ENCODE measurements at regions of chr1 and their contacts with region 1.

Region 1: GRCh38 chr1:47465605-47466004 is 27.8 kb downstream of the FOXD2 start:
- DNase-seq: no peak
- H3K4me3 ChIP-seq: no peak overlapping the region
- H3K27ac ChIP-seq: no peak overlapping the region
- H3K4me1 ChIP-seq: peaks cover 1% of the 10 kb centered on the region
- H3K27me3 ChIP-seq: peaks cover 85% of the 10 kb centered on the region
- CTCF ChIP-seq: no peak

Region 2: GRCh38 chr1:47241114-47242113 is 224.2 kb before region 1 on chr1:
- CTCF ChIA-PET with region 1: no interaction called
- POLR2A ChIA-PET with region 1: no interaction called
- intact Hi-C with region 1: no loop called
- DNase-seq: no peak
- H3K4me3 ChIP-seq: no peak overlapping the region
- H3K27ac ChIP-seq: no peak overlapping the region
- H3K4me1 ChIP-seq: no peaks in the 10 kb centered on the region
- H3K27me3 ChIP-seq: no peaks in the 10 kb centered on the region
- CTCF ChIP-seq: no peak

Region 3: DNA sequence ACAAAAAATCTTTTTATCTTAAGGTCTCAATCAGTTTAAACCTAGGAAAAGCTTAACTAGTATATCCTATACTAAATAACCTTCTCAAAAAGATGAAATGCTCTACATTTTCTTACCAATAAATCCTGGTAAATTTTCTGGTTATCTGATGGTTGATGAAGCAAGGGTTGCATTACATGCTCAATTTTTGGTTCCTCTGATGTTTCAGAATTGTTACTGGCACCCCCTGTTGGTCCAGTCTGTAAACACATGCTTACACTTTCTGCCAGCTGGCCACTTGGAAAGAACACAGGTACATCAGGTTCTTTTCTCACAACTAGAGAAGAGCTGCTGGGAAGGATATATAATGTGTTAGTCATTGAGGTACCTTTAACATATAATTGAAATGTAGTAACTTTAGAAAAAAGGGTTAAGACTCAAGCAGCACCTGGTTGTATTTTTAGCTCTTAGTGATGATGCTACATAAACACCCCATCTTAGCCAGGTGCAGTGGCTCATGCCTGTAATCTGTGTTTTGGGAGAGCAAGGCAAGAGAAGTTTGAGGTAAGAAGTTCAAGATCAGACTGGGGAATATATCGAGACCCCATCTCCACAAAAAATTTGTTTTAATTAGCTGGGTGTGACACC is 202.7 kb before region 1 on chr1:
- CTCF ChIA-PET with region 1: interaction called, 14 read pairs
- POLR2A ChIA-PET with region 1: no interaction called
- intact Hi-C with region 1: no loop called
- DNase-seq: peak; percentile 59
- H3K4me3 ChIP-seq: no peak overlapping the region
- H3K27ac ChIP-seq: no peak overlapping the region
- H3K4me1 ChIP-seq: no peaks in the 10 kb centered on the region
- H3K27me3 ChIP-seq: no peaks in the 10 kb centered on the region
- CTCF ChIP-seq: peak; percentile 64

Measured in A673 (cell line).